ENCODE measurements at regions of chr10 and their contacts with region 1.

Region 1: DNA sequence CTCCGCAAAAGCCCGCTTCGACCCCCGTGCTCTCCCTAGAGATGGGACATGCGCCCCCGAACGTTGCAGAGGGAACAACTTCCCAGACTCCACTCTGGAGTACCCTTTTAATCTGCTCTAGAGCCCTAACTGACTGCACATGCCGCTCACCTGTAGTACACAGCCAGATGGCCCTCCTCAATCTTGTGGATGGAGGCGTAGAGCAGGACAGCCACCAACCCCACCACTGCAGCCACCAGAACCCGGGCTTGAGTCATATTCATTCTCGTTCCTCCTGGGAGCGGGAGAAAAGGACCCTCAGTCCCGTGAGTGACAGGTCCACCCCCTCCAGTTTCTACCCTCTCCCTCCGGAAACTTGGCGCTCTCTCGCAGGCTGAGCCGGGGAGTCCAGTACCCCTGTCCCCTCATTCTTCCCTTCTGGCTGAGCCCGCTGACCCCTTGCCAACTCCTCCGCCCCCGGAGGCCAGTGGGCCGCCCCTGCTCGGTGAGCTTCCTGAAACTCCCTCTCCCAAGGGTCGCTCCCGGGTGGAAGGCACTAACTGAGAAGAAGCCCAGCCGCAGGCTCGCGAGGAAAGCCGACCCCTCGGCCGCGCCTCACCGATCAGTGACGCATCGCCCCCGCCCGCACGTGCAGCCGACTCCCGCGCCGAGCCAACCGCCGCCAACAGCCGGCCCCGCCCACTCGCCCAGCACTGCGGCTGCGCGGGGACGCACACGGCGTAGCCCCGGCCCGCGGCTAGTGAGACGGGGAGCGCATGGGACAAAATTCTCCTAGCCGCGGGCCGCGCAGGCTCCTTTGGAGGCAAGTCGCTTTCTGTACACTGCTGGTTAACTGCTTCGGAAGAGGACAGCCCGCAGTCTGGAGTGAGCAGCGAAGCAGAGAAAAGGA is at the start of gene ERLIN1:
- DNase-seq: peak; percentile 90
- H3K4me3 Mint-ChIP-seq: peak within 1 kb of the TSS; percentile 98
- H3K27ac Mint-ChIP-seq: peak within 1 kb of the TSS; percentile 96
- H3K4me1 Mint-ChIP-seq: peaks cover 59% of the 10 kb centered on the region
- H3K27me3 Mint-ChIP-seq: no peaks in the 10 kb centered on the region
- total RNA-seq, gene ERLIN1: 16.6 and 19.4 TPM in 2 replicates

Region 2: GRCh38 chr10:99732033-99732912 is 453.3 kb before region 1 on chr10 and contains the starts of genes COX15 and CUTC:
- intact Hi-C with region 1: loop called (anchors 2 kb)
- DNase-seq: peak; percentile 94
- H3K4me3 Mint-ChIP-seq: peak within 1 kb of the TSS; percentile 98
- H3K27ac Mint-ChIP-seq: peak within 1 kb of the TSS; percentile 99
- H3K4me1 Mint-ChIP-seq: peaks cover 41% of the 10 kb centered on the region
- H3K27me3 Mint-ChIP-seq: no peaks in the 10 kb centered on the region
- total RNA-seq, gene COX15: 36.7 and 38.1 TPM in 2 replicates
- total RNA-seq, gene CUTC: 42.2 and 45.4 TPM in 2 replicates

Region 3: DNA sequence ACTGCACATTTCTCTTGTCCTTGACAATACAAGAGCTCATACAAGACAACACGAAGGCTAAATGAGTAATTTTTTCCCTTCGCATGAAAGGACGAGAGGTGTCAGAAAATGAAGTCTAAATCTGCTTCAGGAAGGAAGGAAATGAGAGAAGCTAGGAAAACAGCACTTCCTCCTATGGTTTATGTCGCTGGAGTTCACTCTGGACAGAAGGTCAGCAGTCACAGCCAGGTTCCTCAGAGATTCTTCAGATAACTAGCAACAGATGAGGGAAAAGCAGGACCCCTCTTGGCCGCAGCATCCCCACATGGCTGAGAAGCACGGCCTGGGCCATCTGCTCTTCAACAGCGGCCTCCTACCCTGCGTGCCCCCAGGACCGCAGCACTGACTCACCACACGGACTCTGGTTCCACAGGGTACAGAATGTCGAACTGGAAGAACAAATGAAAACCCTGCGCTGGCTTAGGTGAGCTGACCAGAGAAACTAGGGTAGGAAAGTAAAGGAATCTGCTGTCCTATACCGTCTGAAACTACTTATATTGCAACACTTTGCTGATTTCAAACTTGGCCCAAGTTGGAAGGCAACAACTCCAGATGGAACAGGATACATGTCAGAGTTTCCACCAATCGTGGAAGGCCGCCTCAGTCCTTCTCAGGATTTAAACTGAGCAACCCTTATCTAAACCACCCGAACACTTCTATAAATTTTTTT is 202.2 kb before region 1 on chr10:
- intact Hi-C with region 1: no loop called
- DNase-seq: no peak
- H3K4me3 Mint-ChIP-seq: no peak overlapping the region
- H3K27ac Mint-ChIP-seq: no peak overlapping the region
- H3K4me1 Mint-ChIP-seq: no peaks in the 10 kb centered on the region
- H3K27me3 Mint-ChIP-seq: peaks cover 1% of the 10 kb centered on the region

Region 4: GRCh38 chr10:100148353-100149211 is 37.0 kb before region 1 on chr10:
- intact Hi-C with region 1: loop called (anchors 1 kb)
- DNase-seq: no peak
- H3K4me3 Mint-ChIP-seq: peak overlapping the region; percentile 40
- H3K27ac Mint-ChIP-seq: peak overlapping the region; percentile 92
- H3K4me1 Mint-ChIP-seq: peaks cover 26% of the 10 kb centered on the region
- H3K27me3 Mint-ChIP-seq: peaks cover 2% of the 10 kb centered on the region

Region 5: DNA sequence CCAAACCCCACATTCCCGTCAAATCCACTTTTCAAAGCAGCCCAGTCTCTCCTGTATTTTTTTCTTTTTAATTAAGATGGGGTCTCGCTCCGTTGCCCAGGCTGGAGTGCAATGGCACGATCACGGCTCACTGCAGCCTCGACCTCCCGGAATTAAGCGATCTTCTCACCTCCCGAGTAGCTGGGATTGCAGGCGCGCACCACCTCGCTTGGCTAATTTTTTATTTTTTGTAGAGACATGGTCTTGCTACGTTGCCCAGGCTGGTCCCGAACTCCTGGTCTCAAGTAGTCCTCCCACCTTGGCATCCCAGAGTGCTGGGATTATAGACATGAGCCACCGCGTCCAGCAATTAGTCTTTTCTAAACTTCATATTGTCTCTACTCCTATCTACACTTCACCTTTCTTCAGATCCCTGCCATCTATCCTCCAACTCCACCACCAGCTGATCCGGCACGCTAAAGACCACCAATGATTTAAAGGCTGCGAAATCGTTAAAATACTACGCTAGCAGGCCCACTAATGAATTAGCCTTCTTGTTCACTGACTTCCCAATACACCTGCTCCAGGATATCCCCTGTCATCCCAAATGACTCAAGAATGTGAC is 44.3 kb after region 1 on chr10:
- intact Hi-C with region 1: loop called (anchors 1 kb)
- DNase-seq: no peak
- H3K4me3 Mint-ChIP-seq: peak overlapping the region; percentile 97
- H3K27ac Mint-ChIP-seq: peak overlapping the region; percentile 82
- H3K4me1 Mint-ChIP-seq: peaks cover 34% of the 10 kb centered on the region
- H3K27me3 Mint-ChIP-seq: no peaks in the 10 kb centered on the region

Region 6: DNA sequence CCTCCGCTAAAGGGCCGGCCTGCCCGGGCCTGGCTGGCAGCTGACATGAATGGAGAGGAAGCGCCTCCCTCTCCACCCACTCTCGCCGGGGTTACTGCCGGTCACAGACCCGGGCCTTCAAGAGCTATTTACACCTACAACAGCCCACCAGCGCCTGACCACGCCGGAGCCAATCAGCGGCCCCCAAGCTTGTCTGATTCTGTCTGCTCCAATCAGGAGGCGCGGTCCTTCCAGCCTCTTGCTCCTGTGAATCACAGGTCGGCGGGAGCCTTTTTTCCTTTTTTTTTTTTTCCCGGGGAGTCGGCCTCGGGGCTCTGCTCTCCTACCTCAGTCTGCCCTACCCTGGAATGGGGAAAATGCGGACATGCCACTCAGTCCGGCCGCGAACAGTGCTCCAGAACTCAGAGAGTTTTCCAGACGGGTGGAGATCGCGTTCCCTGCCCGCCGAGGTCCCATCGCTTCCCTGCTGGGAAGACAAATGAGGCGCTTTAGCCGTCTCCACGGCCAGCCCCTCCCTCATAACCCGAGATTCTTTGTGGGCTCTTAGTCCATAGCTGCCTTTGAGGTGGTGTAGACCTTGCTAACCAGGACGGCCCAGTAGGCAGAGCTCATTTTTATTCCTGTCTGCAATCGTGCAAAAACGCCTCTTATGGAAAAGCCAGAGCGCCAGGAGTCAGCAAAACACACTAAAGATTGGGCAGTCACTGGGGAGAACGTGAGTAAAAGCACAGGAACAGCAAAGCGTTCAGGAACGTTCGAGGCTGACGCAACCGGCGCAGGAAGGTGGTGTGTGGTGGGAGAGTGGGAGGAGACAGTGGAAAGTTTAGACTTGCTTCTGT is 187.9 kb after region 1 on chr10:
- intact Hi-C with region 1: loop called (anchors 5 kb)
- DNase-seq: peak; percentile 85
- H3K4me3 Mint-ChIP-seq: no peak overlapping the region
- H3K27ac Mint-ChIP-seq: no peak overlapping the region
- H3K4me1 Mint-ChIP-seq: peaks cover 30% of the 10 kb centered on the region
- H3K27me3 Mint-ChIP-seq: no peaks in the 10 kb centered on the region

Measured in activated T-helper 1 cell treated with anti-CD3 and anti-CD28 coated beads, Interleukin-12 subunit alpha, Interleukin-12 subunit beta, Interleukin-2, Interleukin-4 antibody, amounts not matched to agents 30 ng/mL and 10 ng/mL and 1 ng/mL, durations not matched to agents 14 hours and 24 hours and 36 hours (primary cell).